ENCODE measurements at regions of chr12 and their contacts with region 1.

Region 1: DNA sequence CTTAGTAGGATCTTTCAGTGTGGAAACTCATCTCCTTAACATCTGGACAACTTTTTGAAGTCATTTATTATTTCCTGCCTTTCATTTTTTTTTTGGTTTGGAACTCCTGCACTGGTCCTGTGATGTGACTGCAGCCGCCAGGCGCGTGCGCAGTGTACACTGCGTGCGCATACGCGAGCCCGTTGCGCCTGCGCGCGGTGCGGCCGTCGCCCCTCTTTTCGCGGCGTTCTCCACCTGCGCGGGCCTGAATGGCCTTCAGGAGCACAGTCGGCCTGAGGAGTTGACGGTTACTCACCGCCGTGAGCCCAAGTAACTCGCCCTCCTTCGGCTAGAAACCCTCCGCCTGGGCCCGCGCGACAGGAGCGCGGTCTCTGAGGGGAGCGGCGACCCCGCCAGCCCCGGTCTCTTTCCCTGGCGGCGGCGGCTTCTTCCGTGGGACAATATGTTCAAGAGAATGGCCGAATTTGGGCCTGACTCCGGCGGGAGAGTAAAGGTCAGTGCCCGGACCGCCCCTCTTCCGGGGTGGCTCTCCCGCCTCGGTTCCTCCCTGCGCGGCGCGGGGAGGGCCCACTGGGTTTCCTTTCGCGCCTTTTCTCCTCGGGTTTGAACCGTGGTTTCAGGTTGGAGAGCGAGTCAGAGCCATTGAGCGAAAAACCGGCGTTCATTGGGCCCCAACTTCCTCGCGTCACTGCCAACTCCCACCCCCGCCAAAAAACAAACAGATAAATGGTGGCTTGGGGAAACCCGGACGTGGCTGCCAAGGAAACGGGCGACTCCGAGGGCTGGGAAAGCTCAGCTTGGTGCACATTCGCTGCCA is at the start of gene YEATS4:
- DNase-seq: peak; percentile 73 to 93 (median 84)
- ATAC-seq: peak; percentile 86
- H3K4me3 ChIP-seq: peak within 1 kb of the TSS; percentile 76
- H3K4me3 Mint-ChIP-seq: peak within 1 kb of the TSS; percentile 82 to 93 (median 89)
- H3K27ac ChIP-seq: peak within 1 kb of the TSS; percentile 93
- H3K27ac Mint-ChIP-seq: peak within 1 kb of the TSS; percentile 80 to 96 (median 91)
- H3K4me1 ChIP-seq: peaks cover 5 to 6% of the 10 kb centered on the region in 2 donors
- H3K4me1 Mint-ChIP-seq: peaks cover 11 to 32% (median 25%) of the 10 kb centered on the region in 7 donors
- H3K27me3 ChIP-seq: no peaks in the 10 kb centered on the region
- H3K27me3 Mint-ChIP-seq: peaks cover 0 to 3% (median 0%) of the 10 kb centered on the region in 5 donors
- total RNA-seq, gene YEATS4: 16.5 to 34.9 (median 21.4) TPM

Region 2: GRCh38 chr12:68808388-68809189 is 551.1 kb before region 1 on chr12:
- CTCF ChIA-PET with region 1: no interaction called
- POLR2A ChIA-PET with region 1: no interaction called
- intact Hi-C with region 1: no loop called
- DNase-seq: peak; percentile 20 to 78 (median 26)
- ATAC-seq: peak; percentile 18
- H3K4me3 ChIP-seq: peak overlapping the region; percentile 79
- H3K4me3 Mint-ChIP-seq: peak overlapping the region; percentile 87 to 100 (median 96)
- H3K27ac ChIP-seq: peak overlapping the region; percentile 96
- H3K27ac Mint-ChIP-seq: peak overlapping the region; percentile 96 to 100 (median 97)
- H3K4me1 ChIP-seq: peaks cover 3 to 13% of the 10 kb centered on the region in 2 donors
- H3K4me1 Mint-ChIP-seq: peaks cover 7 to 55% (median 37%) of the 10 kb centered on the region in 7 donors
- H3K27me3 ChIP-seq: no peaks in the 10 kb centered on the region
- H3K27me3 Mint-ChIP-seq: no peaks in the 10 kb centered on the region

Region 3: GRCh38 chr12:69290545-69291277 is 69.0 kb before region 1 on chr12:
- CTCF ChIA-PET with region 1: interaction called, 16 read pairs
- POLR2A ChIA-PET with region 1: interaction called, 3 read pairs
- intact Hi-C with region 1: loop called (anchors 1 kb)
- DNase-seq: peak; percentile 57 to 82 (median 75)
- ATAC-seq: peak; percentile 100
- H3K4me3 ChIP-seq: no peak overlapping the region
- H3K4me3 Mint-ChIP-seq: peak overlapping the region in 2 of 10 donors; percentile 14 to 37
- H3K27ac ChIP-seq: no peak overlapping the region
- H3K27ac Mint-ChIP-seq: peak overlapping the region in 1 of 9 donors; percentile 59
- H3K4me1 ChIP-seq: peaks cover 8% of the 10 kb centered on the region in 2 donors
- H3K4me1 Mint-ChIP-seq: peaks cover 6 to 36% (median 22%) of the 10 kb centered on the region in 7 donors
- H3K27me3 ChIP-seq: no peaks in the 10 kb centered on the region
- H3K27me3 Mint-ChIP-seq: peaks cover 0 to 49% (median 18%) of the 10 kb centered on the region in 5 donors

Region 4: GRCh38 chr12:69470189-69471075 is 110.7 kb after region 1 on chr12 and contains the start of gene FRS2:
- CTCF ChIA-PET with region 1: no interaction called
- POLR2A ChIA-PET with region 1: interaction called, 3 read pairs
- intact Hi-C with region 1: loop called (anchors 1 kb)
- DNase-seq: peak; percentile 66 to 87 (median 81)
- ATAC-seq: peak; percentile 99
- H3K4me3 ChIP-seq: peak within 1 kb of the TSS; percentile 80
- H3K4me3 Mint-ChIP-seq: peak within 1 kb of the TSS; percentile 91 to 100 (median 96)
- H3K27ac ChIP-seq: peak within 1 kb of the TSS; percentile 94
- H3K27ac Mint-ChIP-seq: peak within 1 kb of the TSS; percentile 91 to 99 (median 97)
- H3K4me1 ChIP-seq: peaks cover 11 to 12% of the 10 kb centered on the region in 2 donors
- H3K4me1 Mint-ChIP-seq: peaks cover 41 to 60% (median 51%) of the 10 kb centered on the region in 7 donors
- H3K27me3 ChIP-seq: no peaks in the 10 kb centered on the region
- H3K27me3 Mint-ChIP-seq: no peaks in the 10 kb centered on the region
- total RNA-seq, gene FRS2: 17.5 to 30.1 (median 24.0) TPM

Region 5: GRCh38 chr12:69511469-69512267 is 151.9 kb after region 1 on chr12:
- CTCF ChIA-PET with region 1: no interaction called
- POLR2A ChIA-PET with region 1: no interaction called
- intact Hi-C with region 1: no loop called
- DNase-seq: peak in 3 of 9 donors; percentile 3 to 8 (median 5)
- ATAC-seq: no peak
- H3K4me3 ChIP-seq: no peak overlapping the region
- H3K4me3 Mint-ChIP-seq: peak overlapping the region in 5 of 10 donors; percentile 2 to 54 (median 20)
- H3K27ac ChIP-seq: no peak overlapping the region
- H3K27ac Mint-ChIP-seq: peak overlapping the region in 6 of 9 donors; percentile 9 to 56 (median 18)
- H3K4me1 ChIP-seq: peaks cover 13 to 25% of the 10 kb centered on the region in 2 donors
- H3K4me1 Mint-ChIP-seq: peaks cover 19 to 87% (median 76%) of the 10 kb centered on the region in 7 donors
- H3K27me3 ChIP-seq: no peaks in the 10 kb centered on the region
- H3K27me3 Mint-ChIP-seq: no peaks in the 10 kb centered on the region

Region 6: DNA sequence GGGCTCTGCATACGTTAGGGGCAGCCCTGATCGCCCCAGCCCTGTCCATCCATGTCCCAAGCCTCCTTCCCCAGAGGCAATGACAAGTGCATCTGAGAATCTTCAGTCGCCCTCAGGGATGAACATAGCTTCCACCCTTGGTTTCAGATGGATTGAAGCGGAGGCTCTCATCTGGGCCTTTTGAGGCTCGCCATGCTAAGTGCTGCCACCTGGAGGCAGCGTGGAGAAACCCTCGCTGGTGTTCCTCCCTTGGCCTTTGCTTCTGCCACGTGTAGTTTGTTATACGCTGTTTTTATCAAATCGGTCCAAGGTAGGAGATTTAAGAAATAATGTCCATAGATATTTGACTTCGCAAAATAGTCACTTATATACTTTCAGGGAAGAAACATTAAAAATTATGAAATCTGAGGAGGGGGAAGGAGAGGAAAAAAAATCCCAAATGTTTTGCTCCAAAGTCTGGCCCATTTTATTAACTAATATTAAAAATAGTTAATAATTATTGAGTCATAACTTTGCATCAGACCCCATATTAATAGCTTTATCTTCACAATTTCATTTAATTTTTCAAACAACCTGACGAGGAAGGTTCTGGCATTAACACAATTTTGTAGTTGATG is 279.8 kb after region 1 on chr12:
- CTCF ChIA-PET with region 1: interaction called, 9 read pairs
- POLR2A ChIA-PET with region 1: no interaction called
- intact Hi-C with region 1: loop called in 1 of 2 experiments (anchors 1 kb)
- DNase-seq: peak; percentile 10 to 56 (median 47)
- ATAC-seq: peak; percentile 77
- H3K4me3 ChIP-seq: no peak overlapping the region
- H3K4me3 Mint-ChIP-seq: no peak overlapping the region
- H3K27ac ChIP-seq: no peak overlapping the region
- H3K27ac Mint-ChIP-seq: no peak overlapping the region
- H3K4me1 ChIP-seq: no peaks in the 10 kb centered on the region
- H3K4me1 Mint-ChIP-seq: no peaks in the 10 kb centered on the region
- H3K27me3 ChIP-seq: no peaks in the 10 kb centered on the region
- H3K27me3 Mint-ChIP-seq: peaks cover 0 to 4% (median 0%) of the 10 kb centered on the region in 5 donors

Measured in naive thymus-derived CD4-positive, alpha-beta T cell (primary cell).